ENCODE measurements at regions of chr19 and their contacts with region 1.

Region 1: GRCh38 chr19:52897144-52897935 is at the start of gene ZNF320:
- DNase-seq: peak; percentile 89
- H3K4me3 Mint-ChIP-seq: peak within 1 kb of the TSS; percentile 89
- H3K27ac Mint-ChIP-seq: peak within 1 kb of the TSS; percentile 90
- H3K4me1 Mint-ChIP-seq: no peaks in the 10 kb centered on the region
- H3K27me3 Mint-ChIP-seq: no peaks in the 10 kb centered on the region
- total RNA-seq, gene ZNF320: 8.8 and 9.1 TPM in 2 replicates

Region 2: GRCh38 chr19:52809801-52810200 is 87.5 kb before region 1 on chr19:
- intact Hi-C with region 1: no loop called
- DNase-seq: no peak
- H3K4me3 Mint-ChIP-seq: no peak overlapping the region
- H3K27ac Mint-ChIP-seq: no peak overlapping the region
- H3K4me1 Mint-ChIP-seq: no peaks in the 10 kb centered on the region
- H3K27me3 Mint-ChIP-seq: no peaks in the 10 kb centered on the region

Region 3: GRCh38 chr19:52853880-52854279 is 43.5 kb before region 1 on chr19:
- intact Hi-C with region 1: loop called (anchors 1 kb)
- DNase-seq: no peak
- H3K4me3 Mint-ChIP-seq: no peak overlapping the region
- H3K27ac Mint-ChIP-seq: no peak overlapping the region
- H3K4me1 Mint-ChIP-seq: peaks cover 9% of the 10 kb centered on the region
- H3K27me3 Mint-ChIP-seq: no peaks in the 10 kb centered on the region

Region 4: GRCh38 chr19:52922841-52923777 is 25.8 kb after region 1 on chr19 and contains the start of gene ZNF888:
- intact Hi-C with region 1: loop called (anchors 2 kb)
- DNase-seq: peak; percentile 81
- H3K4me3 Mint-ChIP-seq: peak within 1 kb of the TSS; percentile 92
- H3K27ac Mint-ChIP-seq: peak within 1 kb of the TSS; percentile 90
- H3K4me1 Mint-ChIP-seq: peaks cover 21% of the 10 kb centered on the region
- H3K27me3 Mint-ChIP-seq: no peaks in the 10 kb centered on the region
- total RNA-seq, gene ZNF888: 5.0 and 6.1 TPM in 2 replicates

Region 5: DNA sequence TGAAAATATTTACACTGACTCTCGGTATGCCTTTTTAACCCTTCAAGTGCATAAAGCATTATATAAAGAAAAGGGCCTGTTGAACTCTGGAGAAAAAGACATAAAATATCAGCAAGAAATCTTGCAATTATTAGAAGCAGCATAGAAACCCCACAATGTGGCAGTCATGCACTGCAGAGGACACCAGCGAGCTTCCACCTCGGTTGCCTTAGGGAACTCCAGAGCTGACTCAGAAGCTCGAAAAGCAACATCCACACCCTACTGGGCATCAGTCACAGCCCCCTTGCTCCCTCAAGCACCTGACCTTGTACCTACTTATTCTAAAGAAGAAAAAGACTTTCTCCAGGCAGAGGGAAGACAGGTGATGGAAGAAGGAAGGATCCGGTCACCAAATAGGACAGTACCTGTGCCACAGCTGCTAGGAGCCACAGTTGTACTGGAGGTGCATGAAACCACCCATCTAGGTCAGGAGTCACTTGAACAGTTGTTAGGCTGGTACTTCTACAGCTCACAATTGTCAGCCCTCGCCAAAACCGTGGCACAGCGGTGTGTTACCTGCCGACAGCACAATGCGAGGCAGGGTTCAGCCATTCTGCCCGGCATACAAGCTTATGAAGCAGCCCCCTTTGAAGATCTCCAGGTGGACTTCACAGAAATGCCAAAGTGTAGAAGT is 62.4 kb after region 1 on chr19:
- intact Hi-C with region 1: no loop called
- DNase-seq: no peak
- H3K4me3 Mint-ChIP-seq: no peak overlapping the region
- H3K27ac Mint-ChIP-seq: no peak overlapping the region
- H3K4me1 Mint-ChIP-seq: peaks cover 14% of the 10 kb centered on the region
- H3K27me3 Mint-ChIP-seq: no peaks in the 10 kb centered on the region